WTC11 (cell line): ENCODE measurements at regions of chr4 and their contacts with region 1.

Region 1: GRCh38 chr4:95510145-95510544 is 38.6 kb downstream of the UNC5C start:
- DNase-seq: no peak
- ATAC-seq: no peak
- H3K4me3 Mint-ChIP-seq: no peak overlapping the region
- H3K27ac Mint-ChIP-seq: no peak overlapping the region
- H3K4me1 Mint-ChIP-seq: peaks cover 21% of the 10 kb centered on the region
- H3K27me3 Mint-ChIP-seq: no peaks in the 10 kb centered on the region
- CTCF ChIP-seq: 0 out of 2 replicates have a peak, but pooled peaks have one; percentile 33

Region 2: GRCh38 chr4:95499291-95499696 is 10.9 kb before region 1 on chr4:
- CTCF ChIA-PET with region 1: no interaction called
- POLR2A ChIA-PET with region 1: no interaction called
- DNase-seq: no peak
- ATAC-seq: no peak
- H3K4me3 Mint-ChIP-seq: no peak overlapping the region
- H3K27ac Mint-ChIP-seq: no peak overlapping the region
- H3K4me1 Mint-ChIP-seq: no peaks in the 10 kb centered on the region
- H3K27me3 Mint-ChIP-seq: no peaks in the 10 kb centered on the region; the same call in 1 of the 2 replicates
- CTCF ChIP-seq: no peak

Region 3: GRCh38 chr4:95549246-95550114 is 39.3 kb after region 1 on chr4:
- CTCF ChIA-PET with region 1: interaction called, 15 read pairs
- POLR2A ChIA-PET with region 1: no interaction called
- DNase-seq: peak; percentile 52
- ATAC-seq: peak; percentile 23
- H3K4me3 Mint-ChIP-seq: peak overlapping the region; percentile 85
- H3K27ac Mint-ChIP-seq: no peak overlapping the region
- H3K4me1 Mint-ChIP-seq: peaks cover 50% of the 10 kb centered on the region
- H3K27me3 Mint-ChIP-seq: peaks cover 59% of the 10 kb centered on the region
- CTCF ChIP-seq: no peak

Region 4: DNA sequence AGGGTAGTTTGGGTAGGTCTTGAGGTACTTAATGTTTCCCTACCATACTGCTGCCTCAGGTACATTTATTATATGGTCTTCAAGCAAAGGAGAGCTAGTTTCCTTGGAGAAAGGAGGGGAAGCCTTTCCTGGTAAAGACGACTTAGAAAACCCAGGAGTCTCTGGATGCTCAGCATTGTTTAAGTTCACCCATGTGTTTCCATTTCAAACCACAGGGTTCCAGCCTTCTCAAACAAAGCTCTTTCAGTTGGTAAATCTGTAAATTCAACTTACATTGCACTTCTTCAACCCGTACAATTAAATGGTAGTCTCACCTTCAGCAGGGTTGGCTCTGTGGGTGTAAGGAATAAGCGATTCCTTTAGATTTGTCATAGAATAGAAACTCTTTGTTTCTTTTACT is 150.6 kb after region 1 on chr4:
- CTCF ChIA-PET with region 1: no interaction called
- POLR2A ChIA-PET with region 1: no interaction called
- DNase-seq: no peak
- ATAC-seq: peak; percentile 66
- H3K4me3 Mint-ChIP-seq: no peak overlapping the region
- H3K27ac Mint-ChIP-seq: no peak overlapping the region
- H3K4me1 Mint-ChIP-seq: peaks cover 10% of the 10 kb centered on the region
- H3K27me3 Mint-ChIP-seq: no peaks in the 10 kb centered on the region; the same call in 1 of the 2 replicates
- CTCF ChIP-seq: no peak